ENCODE measurements at regions of chr17 and their contacts with region 1.

Region 1: DNA sequence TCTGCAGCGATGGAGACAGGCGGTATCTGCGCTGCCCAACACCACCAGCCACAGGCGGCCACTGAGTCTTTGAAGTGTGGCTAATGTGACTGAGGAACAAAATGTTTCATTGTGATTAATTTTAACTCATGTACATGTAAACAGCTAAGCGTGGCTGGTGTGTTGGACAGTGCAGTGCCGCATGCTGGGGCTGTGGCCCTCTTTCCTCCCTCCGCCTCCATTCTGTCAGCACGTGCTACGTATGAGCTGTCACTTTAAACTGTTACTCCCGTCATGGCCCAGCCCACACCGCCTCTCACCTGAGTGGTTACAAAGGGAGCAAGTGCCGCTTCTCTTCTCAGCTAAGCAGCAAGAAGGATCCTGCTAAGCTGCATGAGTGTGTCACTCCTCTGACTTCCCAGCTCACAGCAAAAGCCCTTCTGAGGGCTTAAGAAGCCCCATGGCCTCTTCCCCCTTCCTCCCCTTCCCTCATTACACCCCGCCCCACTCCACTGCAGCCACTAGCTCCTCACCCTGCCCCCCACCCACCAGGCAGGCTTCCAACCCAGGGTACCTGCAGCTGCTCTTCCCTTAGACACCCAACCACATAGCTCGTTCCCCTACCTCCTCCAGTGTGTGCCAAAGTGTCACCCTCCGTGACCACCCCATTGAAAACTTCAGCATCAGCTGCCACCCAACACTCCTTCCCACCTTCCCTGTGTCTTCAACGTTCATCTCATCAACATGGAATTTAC is 15.0 kb downstream of the HASPIN start:
- DNase-seq: peak; percentile 80
- ATAC-seq: peak; percentile 63
- H3K4me3 Mint-ChIP-seq: no peak overlapping the region
- H3K27ac Mint-ChIP-seq: peak overlapping the region; percentile 34
- H3K4me1 Mint-ChIP-seq: peaks cover 58% of the 10 kb centered on the region
- H3K27me3 Mint-ChIP-seq: no peaks in the 10 kb centered on the region

Region 2: DNA sequence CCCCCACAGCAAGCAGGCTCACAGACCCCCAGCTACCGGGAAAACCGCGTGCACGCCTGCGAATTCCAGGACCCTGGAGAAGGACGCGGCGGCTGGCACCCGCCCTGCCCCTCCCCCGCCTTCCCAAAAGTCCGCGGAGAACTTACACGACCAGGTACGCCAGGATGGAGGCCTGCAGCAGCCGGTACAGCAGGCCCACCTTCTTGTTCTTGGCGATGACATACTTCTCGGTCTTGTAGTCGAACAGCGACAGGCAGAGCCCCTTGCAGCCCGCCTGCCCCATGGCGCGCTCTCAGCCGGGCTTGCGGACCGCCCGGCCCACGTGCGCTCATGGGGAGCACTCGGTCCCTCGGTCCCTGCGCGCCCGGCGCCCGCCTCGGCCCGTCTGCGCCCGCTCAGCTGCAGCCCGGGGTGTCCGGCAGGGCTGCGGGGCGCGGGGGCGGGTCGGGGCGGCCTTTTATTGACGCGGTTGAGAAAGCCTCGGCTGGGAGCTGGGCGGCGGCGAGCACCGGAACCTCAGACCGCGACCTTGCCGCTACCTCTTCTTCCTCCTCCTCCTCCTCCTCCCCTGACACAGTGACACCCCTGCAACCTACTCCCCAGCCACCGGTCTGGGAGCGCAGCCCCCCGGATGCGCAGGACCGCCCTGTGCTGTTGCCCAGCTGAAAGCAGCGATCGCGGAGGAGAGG is 42.9 kb before region 1 on chr17 and contains the start of gene P2RX5:
- CTCF ChIA-PET with region 1: interaction called, 22 read pairs
- DNase-seq: peak; percentile 76
- ATAC-seq: peak; percentile 76
- H3K4me3 Mint-ChIP-seq: peak within 1 kb of the TSS; percentile 85
- H3K27ac Mint-ChIP-seq: peak within 1 kb of the TSS; percentile 88
- H3K4me1 Mint-ChIP-seq: peaks cover 33% of the 10 kb centered on the region
- H3K27me3 Mint-ChIP-seq: no peaks in the 10 kb centered on the region
- total RNA-seq, gene P2RX5: 18.1 to 24.6 TPM

Region 3: DNA sequence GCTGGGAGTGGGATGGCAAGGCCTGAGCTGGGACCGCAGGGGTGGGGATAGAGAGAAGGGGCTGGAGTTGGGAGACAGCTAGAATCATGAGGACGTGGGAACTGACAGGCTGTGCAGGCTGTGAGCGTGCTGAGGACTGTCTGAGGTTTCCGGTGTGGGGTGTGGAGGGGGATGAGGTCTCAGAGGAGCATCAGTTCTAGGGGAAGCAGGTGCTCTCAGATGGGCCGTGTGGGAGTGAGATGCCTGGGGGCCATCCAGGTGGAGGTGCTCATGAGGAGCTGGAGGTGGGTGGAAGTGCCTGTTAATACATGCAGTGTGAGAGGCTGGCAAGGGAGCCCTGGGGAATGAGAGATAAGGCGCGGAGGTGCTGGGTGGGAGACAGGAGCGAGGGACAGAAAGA is 12.2 kb after region 1 on chr17:
- CTCF ChIA-PET with region 1: interaction called, 64 read pairs
- DNase-seq: peak; percentile 87
- ATAC-seq: peak; percentile 76
- H3K4me3 Mint-ChIP-seq: peak overlapping the region; percentile 66
- H3K27ac Mint-ChIP-seq: peak overlapping the region; percentile 90
- H3K4me1 Mint-ChIP-seq: peaks cover 46% of the 10 kb centered on the region
- H3K27me3 Mint-ChIP-seq: no peaks in the 10 kb centered on the region

Region 4: DNA sequence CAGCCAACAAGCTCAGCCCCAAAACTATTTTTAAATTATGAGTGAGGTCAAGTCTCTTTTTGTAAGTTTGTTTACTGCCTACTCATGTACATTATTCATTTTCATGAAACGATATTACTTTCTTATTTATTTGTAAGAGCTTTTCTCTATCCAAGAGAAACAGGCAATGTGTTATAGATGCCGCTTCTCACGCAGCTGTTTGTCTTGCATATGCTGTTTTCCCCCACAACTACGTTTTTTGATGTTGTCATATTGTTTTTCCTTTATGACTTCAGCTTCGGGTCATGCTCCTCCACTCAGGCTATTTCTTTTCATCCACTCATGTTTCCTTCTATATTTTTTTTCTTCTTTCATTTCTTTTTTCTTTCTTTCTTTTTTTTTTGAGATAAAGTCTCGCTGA is 42.3 kb after region 1 on chr17:
- CTCF ChIA-PET with region 1: interaction called, 19 read pairs
- DNase-seq: no peak
- ATAC-seq: no peak
- H3K4me3 Mint-ChIP-seq: no peak overlapping the region
- H3K27ac Mint-ChIP-seq: no peak overlapping the region
- H3K4me1 Mint-ChIP-seq: peaks cover 9% of the 10 kb centered on the region
- H3K27me3 Mint-ChIP-seq: peaks cover 2% of the 10 kb centered on the region

Region 5: GRCh38 chr17:3804503-3804931 is 65.8 kb after region 1 on chr17:
- CTCF ChIA-PET with region 1: interaction called, 84 read pairs
- DNase-seq: peak; percentile 68
- ATAC-seq: peak; percentile 72
- H3K4me3 Mint-ChIP-seq: no peak overlapping the region
- H3K27ac Mint-ChIP-seq: peak overlapping the region; percentile 57
- H3K4me1 Mint-ChIP-seq: peaks cover 50% of the 10 kb centered on the region
- H3K27me3 Mint-ChIP-seq: no peaks in the 10 kb centered on the region

Region 6: DNA sequence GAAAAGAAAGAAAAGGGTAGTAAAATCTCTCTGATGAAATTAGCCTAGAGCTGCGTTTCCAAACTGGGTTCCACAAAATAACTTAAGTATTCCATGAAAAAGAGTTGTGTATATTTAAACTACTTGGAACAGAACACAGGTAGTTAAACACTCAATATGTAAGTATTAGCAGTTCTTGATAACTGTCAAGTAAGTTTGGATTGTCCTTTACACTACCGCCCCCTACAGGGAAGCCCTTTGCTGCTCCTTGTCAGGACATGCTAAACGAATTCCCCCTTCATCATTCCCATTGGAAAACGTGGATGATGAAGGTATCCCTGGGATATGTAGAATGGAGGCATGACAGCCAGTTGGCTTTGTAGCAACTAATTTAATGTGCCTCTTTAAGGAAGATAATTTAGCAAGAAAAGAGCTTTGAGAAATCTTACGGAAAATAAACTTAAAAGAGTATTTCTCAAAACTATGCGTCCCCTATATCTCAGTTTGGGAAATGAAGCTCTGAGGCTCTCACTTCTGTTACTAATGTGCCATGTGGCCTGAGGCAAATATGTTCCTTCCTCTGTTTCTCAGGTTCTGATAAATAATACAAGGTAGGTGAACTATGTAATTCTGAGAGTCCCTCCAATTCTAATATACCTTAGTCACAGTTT is 88.5 kb after region 1 on chr17:
- CTCF ChIA-PET with region 1: interaction called, 283 read pairs
- DNase-seq: peak; percentile 83
- ATAC-seq: peak; percentile 47
- H3K4me3 Mint-ChIP-seq: no peak overlapping the region
- H3K27ac Mint-ChIP-seq: no peak overlapping the region
- H3K4me1 Mint-ChIP-seq: peaks cover 19% of the 10 kb centered on the region
- H3K27me3 Mint-ChIP-seq: no peaks in the 10 kb centered on the region

Region 7: GRCh38 chr17:3913531-3914311 is 175.0 kb after region 1 on chr17:
- CTCF ChIA-PET with region 1: interaction called, 26 read pairs
- DNase-seq: peak; percentile 89
- ATAC-seq: peak; percentile 79
- H3K4me3 Mint-ChIP-seq: no peak overlapping the region
- H3K27ac Mint-ChIP-seq: peak overlapping the region; percentile 9
- H3K4me1 Mint-ChIP-seq: peaks cover 37% of the 10 kb centered on the region
- H3K27me3 Mint-ChIP-seq: peaks cover 9% of the 10 kb centered on the region